Ovary (tissue), 10 donors: ENCODE measurements at regions of chr21 and their contacts with region 1.

Region 1: GRCh38 chr21:20856926-20857325 is 141.3 kb upstream of the NCAM2 start:
- DNase-seq: no peak
- H3K4me3 ChIP-seq: no peak overlapping the region
- H3K27ac ChIP-seq: no peak overlapping the region
- H3K4me1 ChIP-seq: no peaks in the 10 kb centered on the region
- H3K27me3 ChIP-seq: no peaks in the 10 kb centered on the region
- CTCF ChIP-seq: no peak
- EP300 ChIP-seq: no peak
- POLR2A ChIP-seq: no peak

Region 2: DNA sequence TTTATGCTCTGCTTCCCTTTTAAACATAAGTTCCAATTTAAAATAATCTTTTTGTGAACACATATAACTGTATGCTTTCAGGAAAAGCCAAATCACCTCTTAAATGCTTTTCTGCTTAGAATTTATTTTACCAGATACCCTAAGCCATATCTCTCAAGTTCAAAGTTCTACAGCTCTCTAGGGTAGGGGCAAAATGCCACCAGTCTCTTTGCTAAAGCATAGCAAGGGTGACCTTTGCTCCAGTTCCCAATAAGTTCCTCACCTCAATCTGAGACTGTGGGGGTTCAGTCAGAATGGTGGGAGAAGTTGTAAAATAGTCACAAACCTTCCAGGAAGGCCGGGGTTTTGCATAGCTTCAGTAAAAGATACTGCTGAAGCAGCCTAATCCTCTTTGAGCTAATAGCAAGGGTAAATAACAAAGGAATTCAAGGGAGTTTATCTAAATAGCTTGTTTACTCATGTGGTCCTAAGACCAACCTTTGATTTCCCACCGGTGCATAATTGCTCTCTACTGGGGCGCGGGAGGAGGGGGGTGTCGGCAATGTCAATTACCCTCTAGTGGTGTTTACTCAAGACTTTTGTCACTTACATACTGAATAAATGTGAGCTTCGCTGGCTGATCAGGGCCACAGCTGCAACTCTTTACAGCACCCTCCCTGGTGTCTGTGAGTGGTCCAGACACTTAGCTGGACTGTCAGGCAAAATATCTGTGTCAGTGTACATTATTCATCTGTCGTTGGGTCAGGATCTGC is 1517.5 kb after region 1 on chr21:
- intact Hi-C with region 1: loop called in 1 of 4 experiments (anchors 5 kb)
- DNase-seq: no peak
- H3K4me3 ChIP-seq: no peak overlapping the region
- H3K27ac ChIP-seq: no peak overlapping the region
- H3K4me1 ChIP-seq: no peaks in the 10 kb centered on the region
- H3K27me3 ChIP-seq: no peaks in the 10 kb centered on the region
- CTCF ChIP-seq: no peak
- EP300 ChIP-seq: no peak
- POLR2A ChIP-seq: no peak